Activated naive CD4-positive, alpha-beta T cell treated with anti-CD3 and anti-CD28 coated beads for 36 hours (primary cell): ENCODE measurements at regions of chr7 and their contacts with region 1.

Region 1: DNA sequence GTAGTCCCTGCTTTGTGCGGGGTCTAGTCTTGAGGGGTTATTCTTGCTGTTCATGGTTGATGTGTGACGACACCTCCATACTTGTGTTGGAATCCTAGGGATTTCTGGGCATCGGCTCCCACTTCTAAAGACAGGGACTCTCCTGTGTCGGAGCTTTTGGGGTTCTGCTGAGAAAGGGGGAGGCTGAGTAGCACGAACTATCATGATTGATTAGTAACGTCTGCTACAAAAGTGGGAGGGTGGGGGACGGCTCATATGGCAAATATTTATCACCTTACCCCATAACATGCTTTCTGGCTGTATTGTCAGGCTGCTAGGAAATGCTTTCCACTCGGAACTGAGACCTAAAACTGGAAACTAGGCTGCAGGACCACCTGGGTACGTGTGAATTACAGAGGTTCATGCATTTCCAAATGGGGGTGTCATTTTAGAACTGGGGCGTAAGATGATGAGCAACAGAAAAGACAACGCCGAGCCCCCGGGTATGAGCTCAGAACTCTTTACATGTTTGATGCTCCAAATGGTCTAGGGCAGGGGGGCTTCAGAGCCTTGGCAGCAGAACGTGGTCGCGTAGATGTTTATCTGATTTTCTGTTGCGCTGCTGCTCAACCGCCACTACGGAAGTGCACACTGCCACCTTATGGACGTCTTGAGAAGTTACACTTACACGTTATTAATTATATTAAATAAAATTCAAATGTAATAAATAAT is 15.1 kb upstream of the NME8 start:
- DNase-seq: peak; percentile 57
- H3K4me3 Mint-ChIP-seq: peak overlapping the region; percentile 73
- H3K27ac Mint-ChIP-seq: no peak overlapping the region
- H3K4me1 Mint-ChIP-seq: peaks cover 5% of the 10 kb centered on the region
- H3K27me3 Mint-ChIP-seq: peaks cover 4% of the 10 kb centered on the region

Region 2: DNA sequence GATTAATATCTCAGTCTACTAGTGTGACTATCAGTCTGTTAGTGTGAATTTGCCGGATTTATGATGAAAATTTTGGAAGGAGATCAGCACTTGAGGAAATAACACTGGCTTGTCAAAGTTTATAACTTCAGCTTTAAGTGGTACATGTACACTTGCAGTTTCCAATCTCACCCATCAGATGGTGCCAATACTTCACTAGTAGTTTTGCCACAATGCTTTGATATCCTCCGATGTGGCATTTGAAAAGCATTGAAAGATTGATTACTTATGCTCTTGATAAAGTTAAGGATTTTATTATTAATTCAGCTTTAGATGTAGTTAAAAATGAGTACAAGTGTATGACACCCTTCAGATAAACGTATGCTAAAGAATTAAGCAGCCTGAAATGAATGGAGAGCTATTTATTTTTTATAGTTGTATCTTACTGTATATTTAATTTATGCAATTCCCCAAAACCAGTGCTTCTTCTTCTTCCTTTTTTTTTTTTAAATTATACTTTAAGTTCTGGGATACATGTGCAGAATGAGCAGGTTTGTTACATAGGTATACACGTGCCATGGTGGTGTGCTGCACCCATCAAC is 1345.4 kb before region 1 on chr7:
- CTCF ChIA-PET with region 1: no interaction called
- intact Hi-C with region 1: loop called (anchors 5 kb)
- DNase-seq: peak; percentile 54
- H3K4me3 Mint-ChIP-seq: no peak overlapping the region
- H3K27ac Mint-ChIP-seq: no peak overlapping the region
- H3K4me1 Mint-ChIP-seq: peaks cover 2% of the 10 kb centered on the region
- H3K27me3 Mint-ChIP-seq: no peaks in the 10 kb centered on the region

Region 3: GRCh38 chr7:37208528-37208927 is 624.7 kb before region 1 on chr7:
- CTCF ChIA-PET with region 1: no interaction called
- intact Hi-C with region 1: loop called (anchors 5 kb)
- DNase-seq: peak; percentile 52
- H3K4me3 Mint-ChIP-seq: no peak overlapping the region
- H3K27ac Mint-ChIP-seq: peak overlapping the region; percentile 56
- H3K4me1 Mint-ChIP-seq: peaks cover 23% of the 10 kb centered on the region
- H3K27me3 Mint-ChIP-seq: no peaks in the 10 kb centered on the region

Region 4: DNA sequence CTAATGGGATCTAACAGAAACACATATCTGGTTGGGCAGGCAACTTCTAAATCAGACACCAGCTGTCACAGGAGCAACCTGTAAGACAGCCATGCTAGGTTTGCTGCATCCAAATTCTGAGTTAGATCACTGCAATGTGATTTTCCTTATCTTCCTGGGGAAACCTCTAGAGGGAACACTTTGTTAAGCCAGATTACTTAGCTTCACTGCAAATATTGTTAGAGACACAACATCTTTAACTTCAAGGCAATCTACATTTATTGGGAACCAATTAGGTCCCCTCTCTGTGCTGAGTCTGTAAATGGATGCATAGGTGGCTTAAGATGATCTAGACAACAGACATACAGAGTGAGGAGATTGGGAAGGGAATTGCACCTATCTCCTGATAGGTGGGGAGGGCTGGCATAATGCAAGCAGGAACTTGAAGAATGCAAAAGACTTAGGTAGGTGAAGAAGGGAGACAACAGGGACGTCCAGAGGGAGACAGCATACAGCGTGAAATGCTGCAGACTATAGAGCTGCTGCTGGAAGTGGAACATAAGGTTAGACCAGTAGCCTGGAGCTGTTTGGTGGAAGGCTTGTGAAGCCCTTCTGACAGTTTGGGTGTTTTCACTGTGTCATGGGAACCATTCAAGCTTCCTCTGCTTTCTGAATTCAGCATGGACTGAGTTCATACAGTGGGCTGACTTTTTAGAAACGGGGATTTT is 274.8 kb before region 1 on chr7:
- CTCF ChIA-PET with region 1: interaction called, 3 read pairs
- intact Hi-C with region 1: loop called (anchors 10 kb)
- DNase-seq: no peak
- H3K4me3 Mint-ChIP-seq: no peak overlapping the region
- H3K27ac Mint-ChIP-seq: no peak overlapping the region
- H3K4me1 Mint-ChIP-seq: no peaks in the 10 kb centered on the region
- H3K27me3 Mint-ChIP-seq: peaks cover 2% of the 10 kb centered on the region

Region 5: DNA sequence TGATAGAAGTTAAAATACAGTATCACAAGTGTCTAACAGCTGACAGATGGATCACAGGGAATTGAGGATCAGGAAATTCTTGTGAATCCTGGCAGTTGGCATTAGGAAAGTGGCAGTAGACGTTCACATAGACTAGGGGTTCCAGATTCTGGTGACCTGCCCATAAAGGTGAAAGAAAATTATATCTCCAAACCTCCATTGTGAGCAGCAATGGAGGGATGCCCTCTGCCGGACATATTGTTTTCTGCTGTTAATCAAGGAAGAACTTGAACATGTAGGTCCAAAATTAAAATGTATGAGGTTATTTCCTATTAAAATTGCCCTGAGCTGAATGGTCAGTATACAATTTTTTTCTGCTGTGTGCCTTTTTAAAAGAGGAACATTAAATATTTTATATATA is 20.2 kb after region 1 on chr7:
- CTCF ChIA-PET with region 1: no interaction called
- intact Hi-C with region 1: no loop called
- DNase-seq: no peak
- H3K4me3 Mint-ChIP-seq: no peak overlapping the region
- H3K27ac Mint-ChIP-seq: no peak overlapping the region
- H3K4me1 Mint-ChIP-seq: no peaks in the 10 kb centered on the region
- H3K27me3 Mint-ChIP-seq: peaks cover 13% of the 10 kb centered on the region

Region 6: DNA sequence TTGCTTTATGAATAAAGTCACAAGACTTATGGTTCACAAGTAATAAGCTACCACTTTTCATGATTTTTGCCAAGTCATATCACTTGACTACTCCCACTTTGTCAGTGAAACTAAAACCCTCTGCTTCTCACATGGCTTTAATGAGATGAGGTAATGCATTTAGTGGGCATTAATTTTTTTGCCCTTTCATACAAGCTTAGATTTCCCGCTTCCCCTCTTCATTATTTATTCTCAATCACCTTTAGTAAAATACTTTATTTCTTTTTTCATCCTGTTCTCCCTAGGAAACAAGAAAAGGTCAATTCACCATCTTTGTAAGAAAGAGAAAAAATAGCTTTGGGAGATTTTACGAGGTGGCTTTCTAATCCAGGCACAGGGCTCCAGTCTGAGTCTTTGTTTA is 235.2 kb after region 1 on chr7:
- CTCF ChIA-PET with region 1: no interaction called
- intact Hi-C with region 1: no loop called
- DNase-seq: no peak
- H3K4me3 Mint-ChIP-seq: no peak overlapping the region
- H3K27ac Mint-ChIP-seq: no peak overlapping the region
- H3K4me1 Mint-ChIP-seq: no peaks in the 10 kb centered on the region
- H3K27me3 Mint-ChIP-seq: no peaks in the 10 kb centered on the region